CD14-positive monocyte (primary cell): ENCODE measurements at regions of chr6 and their contacts with region 1.

Region 1: GRCh38 chr6:25556516-25556915 is 95.5 kb upstream of the SCGN start:
- DNase-seq: peak; percentile 49 to 67 (median 61)
- H3K4me3 ChIP-seq: no peak overlapping the region
- H3K4me3 Mint-ChIP-seq: no peak overlapping the region
- H3K27ac ChIP-seq: no peak overlapping the region
- H3K27ac Mint-ChIP-seq: no peak overlapping the region
- H3K4me1 ChIP-seq: no peaks in the 10 kb centered on the region
- H3K4me1 Mint-ChIP-seq: peaks cover 2% of the 10 kb centered on the region
- H3K27me3 ChIP-seq: no peaks in the 10 kb centered on the region
- H3K27me3 Mint-ChIP-seq: no peaks in the 10 kb centered on the region
- CTCF ChIP-seq: peak; percentile 88

Region 2: DNA sequence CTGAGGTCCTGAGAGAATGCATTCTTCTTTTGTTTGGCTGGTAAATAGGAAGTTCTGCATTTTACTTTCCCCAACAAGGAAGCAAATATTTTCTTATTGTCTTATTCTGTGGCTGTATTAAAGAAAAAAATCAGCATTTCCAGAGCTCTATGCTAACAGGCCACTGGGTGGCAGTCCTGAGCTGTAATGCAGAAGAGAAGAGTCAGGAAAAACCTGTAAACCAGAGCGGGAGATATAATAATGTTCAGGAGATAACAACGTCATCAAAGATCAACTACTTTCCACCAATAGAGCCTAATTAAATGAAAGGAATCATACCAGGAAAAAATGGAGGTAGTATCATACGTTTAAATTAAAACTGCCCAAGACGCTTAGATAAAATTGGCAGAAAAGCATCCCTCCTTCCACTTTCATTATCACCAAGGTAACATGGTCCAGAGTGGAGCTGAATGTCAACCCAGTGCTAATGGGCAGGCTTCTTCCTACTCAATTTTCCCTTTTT is 333.0 kb before region 1 on chr6:
- intact Hi-C with region 1: loop called (anchors 5 kb)
- DNase-seq: peak; percentile 44 to 67 (median 56)
- H3K4me3 ChIP-seq: peak overlapping the region in 1 of 3 experiments; percentile 35
- H3K4me3 Mint-ChIP-seq: peak overlapping the region; percentile 25 to 79
- H3K27ac ChIP-seq: no peak overlapping the region
- H3K27ac Mint-ChIP-seq: no peak overlapping the region
- H3K4me1 ChIP-seq: peaks cover 8 to 12% of the 10 kb centered on the region in 2 donors
- H3K4me1 Mint-ChIP-seq: peaks cover 31% of the 10 kb centered on the region
- H3K27me3 ChIP-seq: no peaks in the 10 kb centered on the region
- H3K27me3 Mint-ChIP-seq: peaks cover 0 to 2% (median 0%) of the 10 kb centered on the region in 3 donors
- CTCF ChIP-seq: peak; percentile 94

Region 3: GRCh38 chr6:25263657-25264056 is 292.9 kb before region 1 on chr6:
- intact Hi-C with region 1: loop called in 1 of 2 experiments (anchors 5 kb)
- DNase-seq: no peak
- H3K4me3 ChIP-seq: no peak overlapping the region
- H3K4me3 Mint-ChIP-seq: no peak overlapping the region
- H3K27ac ChIP-seq: no peak overlapping the region
- H3K27ac Mint-ChIP-seq: no peak overlapping the region
- H3K4me1 ChIP-seq: peaks cover 0 to 9% of the 10 kb centered on the region in 2 donors
- H3K4me1 Mint-ChIP-seq: peaks cover 1% of the 10 kb centered on the region
- H3K27me3 ChIP-seq: no peaks in the 10 kb centered on the region
- H3K27me3 Mint-ChIP-seq: peaks cover 0 to 2% (median 2%) of the 10 kb centered on the region in 3 donors
- CTCF ChIP-seq: no peak

Region 4: DNA sequence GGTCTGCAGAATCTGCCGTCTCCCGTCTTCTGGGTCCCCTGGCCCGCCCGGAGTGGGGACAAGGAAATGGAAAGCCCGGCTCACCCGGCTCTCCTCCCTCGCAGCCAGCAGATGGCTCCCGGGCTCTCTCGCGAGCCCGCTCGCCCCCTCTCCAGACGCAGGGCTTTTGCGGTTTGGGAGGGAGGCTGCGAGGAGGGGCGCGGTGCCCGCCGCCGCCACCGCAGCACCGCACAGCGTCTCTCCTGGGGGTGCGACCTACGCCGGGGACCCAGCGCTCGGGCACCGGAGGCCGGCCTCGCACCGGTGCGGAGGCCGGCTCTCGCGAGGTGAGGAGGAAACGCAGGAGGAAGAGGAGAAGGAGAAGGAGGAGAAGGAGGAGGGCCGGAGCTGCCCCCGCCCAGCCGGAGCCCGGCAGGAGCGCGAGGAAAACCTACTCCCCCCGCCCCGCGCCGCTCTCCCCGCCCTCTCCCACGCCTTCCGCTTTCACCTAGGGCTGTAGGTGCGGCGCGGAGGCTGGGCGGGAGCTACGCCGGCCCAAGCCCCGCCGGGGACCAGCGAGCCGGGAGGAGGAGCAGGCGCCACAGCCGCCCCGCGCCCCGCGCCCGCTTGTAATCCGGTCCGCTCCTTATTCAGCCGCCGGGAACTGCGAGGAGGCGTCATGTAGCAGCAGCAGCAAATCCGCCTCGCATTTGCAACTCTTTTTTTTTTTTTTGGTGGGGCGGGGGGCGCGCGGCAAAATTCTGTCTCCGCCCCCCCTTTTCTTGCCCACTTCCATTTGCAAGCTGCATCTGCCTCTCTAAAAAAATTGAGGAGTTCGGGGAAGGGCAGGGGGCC is 277.4 kb before region 1 on chr6 and contains the start of gene CARMIL1:
- intact Hi-C with region 1: loop called in 1 of 2 experiments (anchors 10 kb)
- DNase-seq: peak; percentile 28 to 45 (median 40)
- H3K4me3 ChIP-seq: peak within 1 kb of the TSS; percentile 56 to 95 (median 88)
- H3K4me3 Mint-ChIP-seq: peak within 1 kb of the TSS; percentile 83 to 90
- H3K27ac ChIP-seq: no peak within 1 kb of the TSS
- H3K27ac Mint-ChIP-seq: peak within 1 kb of the TSS in 3 of 7 donors; percentile 18 to 68 (median 22)
- H3K4me1 ChIP-seq: peaks cover 17 to 23% of the 10 kb centered on the region in 2 donors
- H3K4me1 Mint-ChIP-seq: peaks cover 28% of the 10 kb centered on the region
- H3K27me3 ChIP-seq: peaks cover 0 to 5% of the 10 kb centered on the region in 2 donors
- H3K27me3 Mint-ChIP-seq: peaks cover 14 to 22% (median 19%) of the 10 kb centered on the region in 3 donors
- CTCF ChIP-seq: peak; percentile 65
- polyA plus RNA-seq, gene CARMIL1: 0.30 to 0.49 (median 0.41) TPM

Region 5: GRCh38 chr6:25499615-25500235 is 56.8 kb before region 1 on chr6:
- intact Hi-C with region 1: no loop called
- DNase-seq: no peak
- H3K4me3 ChIP-seq: no peak overlapping the region
- H3K4me3 Mint-ChIP-seq: no peak overlapping the region
- H3K27ac ChIP-seq: no peak overlapping the region
- H3K27ac Mint-ChIP-seq: no peak overlapping the region
- H3K4me1 ChIP-seq: peaks cover 8 to 12% of the 10 kb centered on the region in 2 donors
- H3K4me1 Mint-ChIP-seq: peaks cover 15% of the 10 kb centered on the region
- H3K27me3 ChIP-seq: no peaks in the 10 kb centered on the region
- H3K27me3 Mint-ChIP-seq: peaks cover 0 to 3% (median 0%) of the 10 kb centered on the region in 3 donors
- CTCF ChIP-seq: no peak

Region 6: DNA sequence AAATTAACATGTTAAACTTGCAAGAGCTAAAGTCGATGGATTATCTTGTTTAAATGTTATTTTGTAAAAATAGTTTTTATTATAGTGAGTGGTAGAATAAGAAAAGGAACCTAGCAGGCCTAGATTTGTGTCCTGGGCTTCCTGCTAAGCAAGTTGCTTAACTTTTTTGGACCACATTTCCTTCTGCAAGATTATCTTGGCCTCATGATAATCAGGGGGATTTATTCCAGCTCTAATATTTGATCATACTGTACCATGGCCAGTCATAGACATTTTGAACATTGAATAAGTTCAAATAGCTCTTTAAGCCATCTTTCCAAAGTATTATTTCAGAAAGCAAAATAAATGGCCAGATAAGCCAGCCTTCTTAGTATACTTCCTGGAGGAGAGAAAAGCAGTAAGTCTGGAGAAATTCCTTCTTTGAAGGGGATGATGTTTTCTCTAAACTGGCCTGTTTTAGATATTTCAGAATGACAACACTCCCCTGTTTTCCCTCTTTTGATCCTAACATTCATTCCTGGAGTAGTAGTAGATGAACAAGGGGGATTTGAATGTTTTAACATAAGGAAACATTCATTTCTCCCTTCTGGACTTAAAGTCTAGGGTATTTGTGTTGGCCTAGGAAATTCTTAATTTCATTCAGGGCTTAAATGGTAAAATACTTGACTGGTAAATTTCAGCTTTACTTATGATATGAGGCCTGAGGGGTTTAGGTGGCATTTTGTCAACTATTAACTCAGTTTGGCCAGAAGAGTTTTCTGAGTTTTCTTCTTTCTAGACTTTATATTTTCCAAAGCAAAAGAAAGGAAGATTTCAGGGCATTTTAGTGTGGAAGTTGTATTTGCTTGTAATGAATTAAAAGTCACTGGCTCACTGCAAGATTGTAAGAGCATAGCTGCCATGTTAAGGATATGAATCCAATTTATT is 13.3 kb before region 1 on chr6:
- intact Hi-C with region 1: no loop called
- DNase-seq: no peak
- H3K4me3 ChIP-seq: no peak overlapping the region
- H3K4me3 Mint-ChIP-seq: no peak overlapping the region
- H3K27ac ChIP-seq: no peak overlapping the region
- H3K27ac Mint-ChIP-seq: no peak overlapping the region
- H3K4me1 ChIP-seq: no peaks in the 10 kb centered on the region
- H3K4me1 Mint-ChIP-seq: no peaks in the 10 kb centered on the region
- H3K27me3 ChIP-seq: no peaks in the 10 kb centered on the region
- H3K27me3 Mint-ChIP-seq: no peaks in the 10 kb centered on the region
- CTCF ChIP-seq: no peak